ENCODE measurements at regions of chr7 and their contacts with region 1.

Region 1: DNA sequence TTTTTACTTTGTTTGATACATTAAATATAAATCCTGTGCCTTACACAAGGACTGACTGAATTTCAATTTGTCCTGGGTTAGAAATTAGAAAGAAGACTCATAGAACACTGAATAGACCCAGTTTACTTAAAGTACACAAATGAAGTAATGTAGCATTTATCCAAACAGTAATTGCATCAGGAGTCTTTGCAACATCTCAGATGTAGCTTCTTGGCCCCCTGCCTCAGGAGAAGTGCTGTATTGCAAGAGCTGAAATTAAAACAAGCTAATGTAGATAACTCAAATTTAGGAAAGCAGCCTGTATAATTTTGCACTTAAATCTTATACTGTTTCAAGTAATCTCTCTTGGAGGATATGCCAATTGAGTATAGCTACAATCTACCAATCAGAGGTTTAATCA is 54.3 kb upstream of the KCND2 start:
- DNase-seq: peak; percentile 32
- ATAC-seq: no peak

Region 2: DNA sequence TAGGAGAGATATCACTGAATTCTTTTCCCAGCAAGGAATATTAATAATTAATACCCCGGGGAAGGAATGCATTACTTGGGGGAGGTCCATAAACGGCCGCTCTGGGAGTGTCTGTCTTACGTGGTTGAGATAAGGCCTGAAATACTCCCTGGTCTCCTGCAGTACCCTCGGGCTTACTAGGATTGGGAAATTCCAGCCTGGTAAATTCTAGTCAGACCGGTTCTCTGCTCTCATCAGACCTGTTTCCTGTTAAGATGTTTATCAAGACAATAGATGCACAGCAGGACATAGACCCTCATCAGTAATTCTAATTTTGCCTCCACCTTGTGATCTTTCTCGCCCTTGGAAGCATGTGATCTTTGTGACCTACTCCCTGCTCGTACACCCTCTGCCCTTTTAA is 108.5 kb before region 1 on chr7:
- intact Hi-C with region 1: no loop called
- DNase-seq: no peak
- ATAC-seq: no peak

Region 3: DNA sequence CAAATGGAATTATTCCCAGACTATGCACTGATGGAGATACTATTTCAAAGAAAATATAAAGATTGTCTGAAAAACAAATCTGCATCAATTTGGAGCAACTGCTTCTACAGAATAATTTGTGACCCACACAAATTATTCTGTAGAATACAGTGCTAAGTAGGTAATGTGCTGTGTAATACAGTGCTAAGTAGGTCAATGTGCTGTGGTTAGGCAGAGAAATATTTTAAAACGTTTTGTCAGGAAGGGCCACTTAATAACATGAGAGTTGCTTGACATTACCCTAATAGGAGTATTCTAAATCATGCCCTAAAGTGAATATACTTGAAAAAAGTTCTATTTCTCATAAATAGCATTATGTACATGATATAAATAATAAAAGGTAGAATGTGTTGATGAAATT is 62.2 kb before region 1 on chr7:
- intact Hi-C with region 1: loop called in 1 of 2 experiments (anchors 10 kb)
- DNase-seq: no peak
- ATAC-seq: no peak